Panc1 (cell line): ENCODE measurements at regions of chr7 and their contacts with region 1.

Region 1: DNA sequence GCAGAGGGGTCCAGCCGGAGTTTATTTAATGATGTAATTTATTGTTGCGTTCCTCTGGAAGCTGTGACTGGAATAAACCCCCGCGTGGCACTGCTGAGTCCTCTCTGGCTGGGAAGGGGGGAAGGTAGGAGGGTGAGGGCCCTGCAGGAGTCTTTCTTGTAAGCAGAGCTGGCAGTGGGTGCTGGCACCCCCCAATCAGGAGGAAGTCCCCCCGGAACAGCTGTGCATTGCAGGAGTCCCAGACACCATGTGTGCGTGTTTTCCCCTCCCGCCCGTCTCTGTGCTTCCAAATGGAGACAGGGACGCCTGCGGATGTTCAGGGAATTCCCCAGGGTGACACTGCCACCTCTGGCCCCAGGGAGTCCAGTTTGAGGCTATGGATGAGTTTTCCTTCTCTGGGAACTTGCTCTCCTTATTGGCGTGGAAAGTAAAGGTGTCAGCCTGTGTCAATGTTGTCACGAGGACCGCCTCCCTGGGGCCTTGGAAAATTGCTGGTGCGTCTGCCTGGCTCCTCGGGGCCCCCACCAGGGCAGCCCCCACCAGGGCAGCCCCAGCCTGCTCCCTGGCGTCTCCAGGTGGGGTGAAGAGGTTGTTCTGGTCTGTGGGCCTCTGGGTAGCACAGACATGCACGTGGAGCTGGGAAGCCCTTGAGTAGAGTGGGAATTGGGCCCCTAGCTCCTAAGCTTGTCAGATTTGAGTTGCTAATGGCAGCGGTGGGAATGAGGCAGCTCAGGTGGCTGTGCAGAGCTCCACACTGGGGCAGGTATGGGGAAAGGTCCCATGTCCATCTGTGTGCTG is 2.7 kb downstream of the FZD9 start:
- DNase-seq: no peak
- ATAC-seq: peak; percentile 51
- H3K4me3 ChIP-seq: 0 out of 4 replicates have a peak overlapping the region, but pooled peaks of 1 of the 2 experiments have one; percentile 10
- H3K27ac ChIP-seq: no peak overlapping the region
- H3K4me1 ChIP-seq: peaks cover 17% of the 10 kb centered on the region
- H3K27me3 ChIP-seq: no peaks in the 10 kb centered on the region
- CTCF ChIP-seq: no peak; the same call in 1 of the 2 replicates

Region 2: DNA sequence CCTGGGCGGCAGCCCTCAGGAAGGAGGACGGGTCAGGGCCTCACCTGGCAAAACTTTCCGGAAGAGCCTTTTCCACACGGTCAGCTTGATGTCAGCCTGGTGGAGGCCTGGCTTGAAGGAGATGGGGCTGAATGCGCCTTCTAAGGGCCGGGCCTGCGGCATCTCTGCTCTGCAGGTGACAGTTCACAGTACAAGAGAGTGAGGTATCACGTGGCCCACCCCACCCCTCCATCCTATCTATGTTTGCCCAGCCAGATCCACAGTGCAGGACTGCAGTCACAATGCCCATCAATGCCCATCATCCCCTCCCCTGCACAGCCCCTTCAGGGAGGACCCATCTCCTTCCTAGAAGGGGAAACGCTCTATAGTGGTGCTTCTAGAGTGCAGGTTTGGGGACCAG is 119.7 kb before region 1 on chr7:
- CTCF ChIA-PET with region 1: no interaction called
- POLR2A ChIA-PET with region 1: no interaction called
- in situ Hi-C with region 1: no loop called
- intact Hi-C with region 1: loop called (anchors 5 kb)
- DNase-seq: no peak
- ATAC-seq: no peak
- H3K4me3 ChIP-seq: no peak overlapping the region
- H3K27ac ChIP-seq: no peak overlapping the region
- H3K4me1 ChIP-seq: no peaks in the 10 kb centered on the region
- H3K27me3 ChIP-seq: no peaks in the 10 kb centered on the region
- CTCF ChIP-seq: no peak

Region 3: GRCh38 chr7:73387221-73387828 is 48.9 kb before region 1 on chr7:
- CTCF ChIA-PET with region 1: no interaction called
- POLR2A ChIA-PET with region 1: no interaction called
- in situ Hi-C with region 1: no loop called
- intact Hi-C with region 1: no loop called
- DNase-seq: no peak
- ATAC-seq: no peak
- H3K4me3 ChIP-seq: no peak overlapping the region
- H3K27ac ChIP-seq: no peak overlapping the region
- H3K4me1 ChIP-seq: no peaks in the 10 kb centered on the region
- H3K27me3 ChIP-seq: no peaks in the 10 kb centered on the region
- CTCF ChIP-seq: no peak

Region 4: DNA sequence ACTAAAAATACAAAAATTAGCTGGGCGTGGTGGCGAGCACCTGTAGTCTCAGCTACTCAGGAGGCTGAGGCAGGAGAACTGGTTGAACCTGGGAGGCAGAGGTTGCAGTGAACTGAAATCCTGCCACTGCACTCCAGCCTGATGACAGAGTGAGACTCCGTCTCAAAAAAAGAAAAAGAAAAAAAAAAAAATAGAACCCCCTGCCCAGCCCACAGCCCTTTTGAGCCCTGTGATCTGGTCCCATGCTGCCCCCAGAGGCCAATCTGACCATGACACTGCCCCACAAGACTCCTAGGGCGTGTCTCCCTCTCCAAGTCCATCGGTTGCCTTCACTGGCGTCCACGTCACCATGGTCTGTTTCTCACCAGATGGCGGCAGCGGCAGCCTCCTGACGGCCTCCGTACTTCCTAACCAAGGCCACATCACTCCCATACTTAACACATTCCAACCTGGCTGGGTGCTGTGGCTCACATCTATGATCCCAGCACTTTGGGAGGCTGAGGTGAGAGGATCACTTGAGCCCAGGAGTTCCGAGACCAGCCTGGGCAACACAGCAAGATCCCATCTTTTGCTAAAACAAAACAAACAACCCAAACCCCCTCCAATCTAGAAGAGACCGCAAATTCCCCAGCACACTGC is 265.2 kb after region 1 on chr7:
- CTCF ChIA-PET with region 1: no interaction called
- POLR2A ChIA-PET with region 1: no interaction called
- in situ Hi-C with region 1: no loop called
- intact Hi-C with region 1: no loop called
- DNase-seq: peak; percentile 76
- ATAC-seq: peak; percentile 41
- H3K4me3 ChIP-seq: no peak overlapping the region
- H3K27ac ChIP-seq: peak overlapping the region; percentile 80
- H3K4me1 ChIP-seq: peaks cover 68% of the 10 kb centered on the region
- H3K27me3 ChIP-seq: no peaks in the 10 kb centered on the region
- CTCF ChIP-seq: peak; percentile 93